OCI-LY7 (cell line): ENCODE measurements at regions of chr9 and their contacts with region 1.

Region 1: GRCh38 chr9:129139993-129140396 is 28.8 kb downstream of the PTPA start:
- DNase-seq: peak; percentile 96
- H3K4me3 ChIP-seq: peak overlapping the region; percentile 64
- H3K27ac ChIP-seq: peak overlapping the region; percentile 91
- H3K4me1 ChIP-seq: peaks cover 53% of the 10 kb centered on the region
- CTCF ChIP-seq: no peak

Region 2: DNA sequence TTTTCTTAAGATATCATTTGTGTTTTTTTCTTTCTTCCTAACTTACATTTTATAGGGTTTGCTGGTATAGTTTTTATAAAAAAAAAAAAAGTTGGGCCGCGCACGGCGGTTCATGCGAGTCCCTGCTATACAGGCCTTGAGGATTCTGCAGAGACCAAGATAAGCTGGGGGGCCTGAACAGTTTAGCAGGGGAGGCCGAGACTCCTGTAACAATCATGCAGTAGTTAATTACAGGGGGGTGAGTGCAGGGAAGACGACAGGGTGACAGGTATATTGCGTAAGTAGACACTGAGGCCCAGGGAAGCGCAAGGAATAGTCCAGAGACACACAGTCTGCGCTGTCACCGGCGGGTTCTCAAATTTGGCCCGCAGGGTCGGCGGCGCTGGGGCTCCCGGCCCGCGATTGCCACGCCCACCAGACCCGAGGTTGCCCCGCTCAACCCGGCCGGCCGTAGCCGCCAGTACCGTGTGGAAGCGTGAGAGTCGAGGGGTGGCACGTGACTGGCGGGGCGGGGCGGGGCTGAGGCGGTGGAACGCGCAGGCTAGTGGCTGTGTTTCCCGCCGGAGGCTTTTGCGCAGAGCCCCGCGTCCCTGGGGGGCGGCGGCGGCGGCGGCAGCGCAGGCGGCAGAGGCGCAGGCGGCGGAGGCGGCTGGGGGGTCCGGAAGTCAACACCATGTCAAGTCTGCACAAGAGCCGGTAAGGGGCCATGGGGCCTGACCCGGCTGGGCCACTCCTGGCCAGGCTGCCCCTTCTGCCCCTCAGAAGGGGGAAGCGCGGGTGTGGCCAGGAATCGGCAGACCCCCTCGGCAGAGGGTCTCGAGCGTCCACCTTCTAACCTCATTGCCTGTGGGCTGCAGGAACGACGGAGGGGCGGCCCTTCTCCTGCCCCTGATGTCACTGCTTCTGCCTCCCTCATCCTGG is 353.1 kb before region 1 on chr9 and contains the start of gene TBC1D13:
- CTCF ChIA-PET with region 1: no interaction called
- POLR2A ChIA-PET with region 1: no interaction called
- intact Hi-C with region 1: no loop called
- DNase-seq: peak; percentile 93
- H3K4me3 ChIP-seq: peak within 1 kb of the TSS; percentile 97
- H3K27ac ChIP-seq: peak within 1 kb of the TSS; percentile 80
- H3K4me1 ChIP-seq: peaks cover 42% of the 10 kb centered on the region
- CTCF ChIP-seq: no peak
- total RNA-seq, gene TBC1D13: 14.9 and 18.7 TPM in 2 replicates

Region 3: DNA sequence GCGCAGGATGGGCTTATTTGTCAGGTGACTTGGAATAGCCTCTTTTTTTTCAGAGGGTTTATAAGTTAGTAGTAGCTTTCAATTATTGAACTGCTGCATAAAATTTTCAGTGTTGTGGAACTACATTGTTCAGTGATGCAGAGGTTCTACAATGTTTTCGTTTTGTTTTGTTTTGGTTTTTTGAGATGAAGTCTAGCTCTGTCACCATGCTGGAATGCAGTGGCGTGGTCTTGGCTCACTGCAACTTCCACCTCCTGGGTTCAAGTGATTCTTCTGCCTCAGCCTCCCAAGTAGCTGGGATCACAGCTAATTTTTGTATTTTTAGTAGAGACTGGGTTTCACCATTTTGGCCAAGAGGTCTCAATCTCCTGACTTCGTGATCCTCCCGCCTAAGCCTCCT is 170.5 kb before region 1 on chr9:
- CTCF ChIA-PET with region 1: no interaction called
- POLR2A ChIA-PET with region 1: no interaction called
- intact Hi-C with region 1: no loop called
- DNase-seq: no peak
- H3K4me3 ChIP-seq: no peak overlapping the region
- H3K27ac ChIP-seq: no peak overlapping the region
- H3K4me1 ChIP-seq: no peaks in the 10 kb centered on the region
- CTCF ChIP-seq: no peak

Region 4: GRCh38 chr9:129270903-129271431 is 131.0 kb after region 1 on chr9:
- CTCF ChIA-PET with region 1: no interaction called
- POLR2A ChIA-PET with region 1: no interaction called
- intact Hi-C with region 1: loop called (anchors 5 kb)
- DNase-seq: peak; percentile 57
- H3K4me3 ChIP-seq: peak overlapping the region; percentile 49
- H3K27ac ChIP-seq: peak overlapping the region; percentile 87
- H3K4me1 ChIP-seq: peaks cover 56% of the 10 kb centered on the region
- CTCF ChIP-seq: no peak

Region 5: GRCh38 chr9:129413537-129414376 is 273.8 kb after region 1 on chr9:
- CTCF ChIA-PET with region 1: no interaction called
- POLR2A ChIA-PET with region 1: no interaction called
- intact Hi-C with region 1: loop called (anchors 2 kb)
- DNase-seq: peak; percentile 98
- H3K4me3 ChIP-seq: peak overlapping the region; percentile 71
- H3K27ac ChIP-seq: peak overlapping the region; percentile 91
- H3K4me1 ChIP-seq: peaks cover 54% of the 10 kb centered on the region
- CTCF ChIP-seq: no peak

Region 6: DNA sequence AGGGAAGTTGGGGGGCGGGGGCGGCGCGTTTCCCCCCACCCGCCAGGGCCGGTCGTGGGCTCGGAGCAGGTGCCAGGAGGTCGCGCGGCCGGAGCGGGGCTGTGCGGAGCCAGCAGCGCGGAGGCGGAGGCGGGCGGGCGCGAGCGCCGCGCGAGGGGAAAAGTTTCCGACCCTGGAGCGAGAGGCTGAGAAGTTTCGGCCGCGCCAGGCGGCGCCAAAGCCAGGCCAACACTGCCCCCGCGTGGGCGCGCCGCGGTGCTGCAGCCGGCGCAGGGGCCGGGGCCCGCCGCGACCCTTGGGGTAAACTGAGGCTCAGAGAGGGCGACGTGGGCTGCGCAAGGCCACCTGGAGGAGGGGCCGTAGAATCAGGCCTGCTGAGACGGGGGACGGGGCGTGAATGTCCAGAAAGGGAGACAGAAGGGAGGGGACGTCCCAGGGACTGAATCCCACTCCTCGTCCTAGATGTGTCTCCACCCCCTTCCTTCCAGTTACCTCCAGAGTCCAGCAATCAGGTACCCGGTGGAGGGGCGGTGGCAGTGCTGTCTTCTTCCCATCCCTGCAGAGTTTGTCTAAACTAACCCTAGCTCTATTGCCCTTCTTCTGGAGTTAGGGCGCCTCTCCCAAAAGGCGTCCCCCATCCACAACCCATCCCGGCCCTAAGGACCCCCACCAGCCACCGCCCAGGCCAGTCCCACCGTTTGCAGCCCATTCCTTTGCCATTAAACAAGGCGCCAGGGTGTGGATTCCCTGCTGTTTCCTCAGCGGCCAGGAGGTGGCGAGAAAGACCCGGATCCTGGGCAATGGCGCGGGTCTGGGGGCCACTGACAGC is 470.7 kb after region 1 on chr9:
- CTCF ChIA-PET with region 1: no interaction called
- POLR2A ChIA-PET with region 1: no interaction called
- intact Hi-C with region 1: loop called (anchors 1 kb)
- DNase-seq: peak; percentile 80
- H3K4me3 ChIP-seq: peak overlapping the region; percentile 75
- H3K27ac ChIP-seq: no peak overlapping the region
- H3K4me1 ChIP-seq: peaks cover 25% of the 10 kb centered on the region
- CTCF ChIP-seq: peak; percentile 85